Activated B cell treated with CpG ODN at 0.5 μM for 24 hours (primary cell): ENCODE measurements at regions of chr7 and their contacts with region 1.

Region 1: GRCh38 chr7:18352339-18353255 is 143.0 kb upstream of the HDAC9 start:
- DNase-seq: no peak
- ATAC-seq: peak; percentile 73
- H3K4me3 Mint-ChIP-seq: no peak overlapping the region
- H3K27ac Mint-ChIP-seq: no peak overlapping the region
- H3K4me1 Mint-ChIP-seq: peaks cover 28% of the 10 kb centered on the region
- H3K27me3 Mint-ChIP-seq: no peaks in the 10 kb centered on the region
- CTCF ChIP-seq: peak; percentile 81

Region 2: GRCh38 chr7:17130281-17131059 is 1222.1 kb before region 1 on chr7:
- CTCF ChIA-PET with region 1: no interaction called
- POLR2A ChIA-PET with region 1: no interaction called
- intact Hi-C with region 1: no loop called
- DNase-seq: no peak
- ATAC-seq: no peak
- H3K4me3 Mint-ChIP-seq: no peak overlapping the region
- H3K27ac Mint-ChIP-seq: no peak overlapping the region
- H3K4me1 Mint-ChIP-seq: peaks cover 16% of the 10 kb centered on the region
- H3K27me3 Mint-ChIP-seq: no peaks in the 10 kb centered on the region
- CTCF ChIP-seq: no peak

Region 3: DNA sequence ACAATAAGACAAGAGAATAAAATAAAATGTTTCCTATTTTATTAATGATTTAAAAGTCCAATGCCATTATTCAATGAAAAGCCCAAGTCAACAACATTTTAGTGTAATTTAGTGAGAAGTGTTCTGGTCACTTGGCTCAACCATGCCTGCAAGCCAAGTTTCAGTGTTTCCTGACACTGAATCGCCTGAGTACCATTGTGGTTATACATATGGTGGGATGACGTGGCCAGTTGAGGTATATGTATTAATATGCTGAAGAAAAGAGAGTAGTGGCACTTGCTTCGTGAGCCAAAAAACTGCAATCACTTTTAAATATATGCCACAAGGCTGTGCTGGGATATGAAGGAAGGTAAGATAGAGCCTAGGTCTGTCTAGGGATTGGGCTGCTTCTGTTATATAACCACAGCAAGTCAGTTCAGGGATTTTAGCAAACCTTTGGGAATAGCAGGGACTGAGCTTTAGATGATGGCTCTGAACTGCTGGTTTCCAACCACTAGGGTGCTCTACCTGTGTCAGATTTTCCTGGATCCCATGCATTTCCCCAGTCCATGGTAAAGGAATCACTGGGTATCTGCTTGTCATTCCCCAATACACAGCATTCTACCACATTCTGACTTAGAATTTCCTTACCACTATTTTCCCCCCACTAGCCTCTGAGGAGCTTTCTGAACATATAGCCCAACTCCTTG is 110.9 kb before region 1 on chr7:
- CTCF ChIA-PET with region 1: interaction called, 3 read pairs
- POLR2A ChIA-PET with region 1: interaction called, 11 read pairs
- intact Hi-C with region 1: no loop called
- DNase-seq: no peak
- ATAC-seq: no peak
- H3K4me3 Mint-ChIP-seq: no peak overlapping the region
- H3K27ac Mint-ChIP-seq: no peak overlapping the region
- H3K4me1 Mint-ChIP-seq: no peaks in the 10 kb centered on the region
- H3K27me3 Mint-ChIP-seq: peaks cover 3% of the 10 kb centered on the region
- CTCF ChIP-seq: no peak

Region 4: GRCh38 chr7:18313965-18314364 is 38.6 kb before region 1 on chr7:
- CTCF ChIA-PET with region 1: no interaction called
- POLR2A ChIA-PET with region 1: no interaction called
- intact Hi-C with region 1: no loop called
- DNase-seq: no peak
- ATAC-seq: no peak
- H3K4me3 Mint-ChIP-seq: no peak overlapping the region
- H3K27ac Mint-ChIP-seq: no peak overlapping the region
- H3K4me1 Mint-ChIP-seq: peaks cover 51% of the 10 kb centered on the region
- H3K27me3 Mint-ChIP-seq: no peaks in the 10 kb centered on the region
- CTCF ChIP-seq: no peak

Region 5: GRCh38 chr7:18590744-18591340 is 238.2 kb after region 1 on chr7:
- CTCF ChIA-PET with region 1: interaction called, 12 read pairs
- POLR2A ChIA-PET with region 1: no interaction called
- intact Hi-C with region 1: loop called (anchors 1 kb)
- DNase-seq: no peak
- ATAC-seq: peak; percentile 37
- H3K4me3 Mint-ChIP-seq: no peak overlapping the region
- H3K27ac Mint-ChIP-seq: peak overlapping the region; percentile 78
- H3K4me1 Mint-ChIP-seq: peaks cover 30% of the 10 kb centered on the region
- H3K27me3 Mint-ChIP-seq: no peaks in the 10 kb centered on the region
- CTCF ChIP-seq: no peak

Region 6: DNA sequence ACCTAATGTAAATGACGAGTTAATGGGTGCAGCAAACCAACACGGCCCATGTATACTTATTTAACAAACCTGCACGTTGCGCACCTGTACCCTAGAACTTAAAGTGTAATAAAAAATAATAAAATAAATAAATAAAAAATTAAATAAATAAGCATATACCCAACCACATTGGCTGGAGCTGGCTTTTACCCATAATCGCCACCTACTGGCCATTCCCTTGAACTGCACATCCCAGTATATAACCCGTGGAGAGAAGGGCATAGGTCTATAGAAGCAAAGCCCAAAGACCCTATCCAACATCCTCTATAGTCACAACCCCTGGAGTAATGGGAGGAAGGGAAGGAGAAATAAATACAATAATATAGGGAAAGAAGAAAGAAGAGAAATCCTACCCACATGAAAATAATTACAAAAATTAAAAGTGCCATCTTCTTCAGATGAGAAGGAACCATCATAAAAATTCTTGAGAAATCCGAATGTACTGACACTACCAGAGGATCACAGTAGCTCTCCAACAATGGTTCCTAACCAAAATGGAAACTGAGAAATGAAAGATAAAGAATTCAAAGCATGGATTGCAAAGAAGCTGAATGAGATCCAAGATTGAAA is 699.3 kb after region 1 on chr7:
- CTCF ChIA-PET with region 1: interaction called, 101 read pairs
- POLR2A ChIA-PET with region 1: no interaction called
- intact Hi-C with region 1: loop called (anchors 1 kb)
- DNase-seq: no peak
- ATAC-seq: peak; percentile 66
- H3K4me3 Mint-ChIP-seq: no peak overlapping the region
- H3K27ac Mint-ChIP-seq: no peak overlapping the region
- H3K4me1 Mint-ChIP-seq: no peaks in the 10 kb centered on the region
- H3K27me3 Mint-ChIP-seq: no peaks in the 10 kb centered on the region
- CTCF ChIP-seq: peak; percentile 39

Region 7: GRCh38 chr7:19665399-19666008 is 1312.9 kb after region 1 on chr7:
- CTCF ChIA-PET with region 1: interaction called, 14 read pairs
- POLR2A ChIA-PET with region 1: no interaction called
- intact Hi-C with region 1: loop called (anchors 1 kb)
- DNase-seq: no peak
- ATAC-seq: peak; percentile 32
- H3K4me3 Mint-ChIP-seq: no peak overlapping the region
- H3K27ac Mint-ChIP-seq: no peak overlapping the region
- H3K4me1 Mint-ChIP-seq: peaks cover 20% of the 10 kb centered on the region
- H3K27me3 Mint-ChIP-seq: no peaks in the 10 kb centered on the region
- CTCF ChIP-seq: no peak